SK-N-SH (cell line): ENCODE measurements at regions of chr1 and their contacts with region 1.

Region 1: DNA sequence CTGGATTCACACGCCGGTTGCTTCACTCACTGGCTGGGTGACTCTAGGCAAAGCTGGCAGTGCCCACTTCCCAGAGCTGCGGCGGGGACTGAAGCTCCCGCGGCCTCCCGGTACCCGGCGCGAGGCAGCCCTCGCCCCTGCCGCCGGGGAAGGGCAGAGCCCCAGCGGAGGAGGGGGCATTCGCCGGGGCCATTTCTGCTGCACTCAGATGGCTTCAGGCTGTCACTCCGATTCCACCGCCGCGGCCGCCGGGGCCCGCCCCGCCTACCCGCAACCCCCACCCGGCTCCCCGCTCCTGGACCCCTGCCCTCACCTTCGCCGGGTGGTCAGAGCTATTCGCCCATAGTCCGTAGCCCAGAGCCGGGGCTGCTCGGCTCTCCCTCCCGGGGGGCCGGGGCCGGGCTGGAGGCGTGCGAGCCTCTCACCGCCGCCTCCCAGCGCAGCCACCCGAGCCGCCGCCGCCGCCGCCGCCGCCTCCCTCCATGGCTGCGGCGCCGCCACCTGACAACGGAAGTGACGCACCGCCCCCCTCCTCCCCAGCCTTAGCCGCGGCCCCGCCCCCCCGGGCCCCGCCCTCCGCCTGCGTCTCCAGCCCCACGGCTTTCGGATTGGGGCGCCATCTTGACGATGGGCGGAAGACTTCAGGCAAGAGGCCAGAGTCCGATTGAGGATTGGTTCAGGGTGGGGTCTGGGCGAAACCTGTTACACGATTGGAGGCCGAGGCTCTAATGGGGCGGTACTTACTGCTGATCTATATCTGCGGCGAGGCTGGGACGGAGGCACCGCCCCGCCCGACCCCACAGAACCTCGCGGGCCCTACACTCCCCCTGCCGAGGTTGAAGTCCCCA is at the start of gene STK40:
- DNase-seq: peak; percentile 97
- H3K4me3 ChIP-seq: peak within 1 kb of the TSS; percentile 79 to 83
- H3K27ac ChIP-seq: peak within 1 kb of the TSS; percentile 97 to 99
- H3K4me1 ChIP-seq: peaks cover 25 to 30% of the 10 kb centered on the region in 2 experiments
- H3K27me3 ChIP-seq: no peaks in the 10 kb centered on the region
- CTCF ChIP-seq: no peak
- EP300 ChIP-seq: no peak
- RAD21 ChIP-seq: no peak
- polyA plus RNA-seq, gene STK40: 39.0 and 43.3 TPM in 2 replicates

Region 2: DNA sequence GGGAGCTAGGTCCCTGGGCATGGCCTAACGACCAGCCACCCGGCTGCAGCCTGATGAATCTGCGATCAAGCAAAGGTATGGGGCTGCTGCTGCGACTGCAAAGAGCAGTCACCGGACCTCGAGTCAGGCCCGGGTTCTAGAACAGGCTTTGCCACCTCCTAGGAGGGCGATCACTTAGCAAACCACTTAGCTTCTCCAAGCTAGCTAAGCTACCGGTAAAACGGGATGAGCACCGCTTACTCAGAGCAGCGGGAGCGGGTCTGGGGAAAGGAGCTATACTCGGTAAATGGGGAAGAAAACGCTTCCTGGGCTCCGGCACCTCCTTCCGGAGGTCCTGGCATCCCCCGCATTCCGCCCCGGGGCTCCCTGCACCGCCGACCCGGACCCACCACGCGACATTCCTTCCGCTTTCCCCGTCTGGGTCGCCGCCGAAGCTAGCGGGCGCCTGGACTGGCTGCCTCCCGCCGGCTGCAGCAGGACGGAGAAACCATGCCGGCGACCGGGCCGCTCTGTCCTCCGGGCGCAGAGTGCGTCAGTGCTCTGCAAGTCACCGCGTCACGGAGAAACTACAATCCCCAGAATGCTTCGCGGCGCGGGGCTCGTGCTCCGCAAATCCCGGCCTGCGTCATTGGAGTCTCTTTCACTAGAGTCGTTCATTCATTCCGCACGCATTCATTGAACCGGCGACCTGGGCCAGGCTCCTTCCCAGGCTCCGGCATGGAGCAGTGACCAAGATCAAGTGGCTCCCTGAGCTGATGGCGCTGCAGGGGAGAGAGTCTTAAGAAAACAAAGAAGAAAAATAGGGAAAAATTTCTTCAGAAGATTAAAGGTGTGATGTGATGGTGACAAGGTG is 12.0 kb after region 1 on chr1 and contains the start of gene LSM10:
- CTCF ChIA-PET with region 1: interaction called, 5 read pairs
- POLR2A ChIA-PET with region 1: interaction called, 25 read pairs
- DNase-seq: peak; percentile 92
- H3K4me3 ChIP-seq: peak within 1 kb of the TSS; percentile 80 to 98
- H3K27ac ChIP-seq: peak within 1 kb of the TSS; percentile 83
- H3K4me1 ChIP-seq: peaks cover 0 to 5% of the 10 kb centered on the region in 2 experiments; a peak in 2 of 4 replicates
- H3K27me3 ChIP-seq: no peaks in the 10 kb centered on the region
- CTCF ChIP-seq: no peak
- EP300 ChIP-seq: no peak
- RAD21 ChIP-seq: no peak
- polyA plus RNA-seq, gene LSM10: 87.5 and 96.8 TPM in 2 replicates

Region 3: DNA sequence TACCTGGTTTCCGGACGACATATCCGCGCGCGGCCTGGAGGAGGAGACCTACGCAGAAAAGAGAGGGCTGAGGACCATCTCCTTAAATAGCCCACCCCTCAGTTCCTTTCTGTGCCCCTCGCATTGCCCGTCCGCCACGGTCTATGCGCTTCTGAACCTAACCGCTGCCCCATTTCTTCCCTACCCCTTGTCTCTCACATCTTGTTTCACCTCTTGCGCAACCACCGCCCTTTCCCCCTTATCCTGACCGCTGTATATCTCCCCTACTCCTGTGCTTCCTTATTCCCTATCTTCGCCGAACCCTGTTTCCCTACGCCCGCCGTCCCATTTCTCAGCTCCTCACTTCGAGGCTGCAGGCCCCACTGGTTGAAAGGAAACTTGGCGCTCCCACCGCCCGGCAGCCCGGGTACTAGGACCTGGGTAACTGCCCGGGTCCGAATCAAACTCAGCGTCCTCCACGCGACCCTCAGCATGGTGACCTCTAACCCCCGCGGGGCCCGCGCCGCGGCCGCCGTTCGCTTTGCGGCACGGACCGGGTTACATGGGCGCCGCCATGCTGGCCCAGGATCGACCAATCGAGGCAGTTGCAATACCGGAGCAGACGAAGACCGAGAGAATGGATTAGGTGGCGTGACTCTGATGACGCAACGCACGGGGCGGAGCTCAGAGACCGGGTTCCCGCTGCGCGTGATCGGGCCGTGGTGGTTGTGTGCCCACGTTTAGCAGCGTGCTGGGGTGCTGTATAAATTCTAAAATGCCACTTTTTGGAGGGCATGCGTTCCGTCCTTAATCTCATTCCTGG is 78.4 kb after region 1 on chr1 and contains the start of gene MRPS15:
- CTCF ChIA-PET with region 1: no interaction called
- POLR2A ChIA-PET with region 1: no interaction called
- DNase-seq: peak; percentile 96
- H3K4me3 ChIP-seq: peak within 1 kb of the TSS; percentile 91 to 98
- H3K27ac ChIP-seq: peak within 1 kb of the TSS; percentile 70 to 89
- H3K4me1 ChIP-seq: peaks cover 0 to 10% of the 10 kb centered on the region in 2 experiments; a peak in 2 of 4 replicates
- H3K27me3 ChIP-seq: no peaks in the 10 kb centered on the region
- CTCF ChIP-seq: no peak
- EP300 ChIP-seq: no peak
- RAD21 ChIP-seq: no peak
- polyA plus RNA-seq, gene MRPS15: 64.2 and 75.1 TPM in 2 replicates